ENCODE measurements at regions of chr2 and their contacts with region 1.

Region 1: DNA sequence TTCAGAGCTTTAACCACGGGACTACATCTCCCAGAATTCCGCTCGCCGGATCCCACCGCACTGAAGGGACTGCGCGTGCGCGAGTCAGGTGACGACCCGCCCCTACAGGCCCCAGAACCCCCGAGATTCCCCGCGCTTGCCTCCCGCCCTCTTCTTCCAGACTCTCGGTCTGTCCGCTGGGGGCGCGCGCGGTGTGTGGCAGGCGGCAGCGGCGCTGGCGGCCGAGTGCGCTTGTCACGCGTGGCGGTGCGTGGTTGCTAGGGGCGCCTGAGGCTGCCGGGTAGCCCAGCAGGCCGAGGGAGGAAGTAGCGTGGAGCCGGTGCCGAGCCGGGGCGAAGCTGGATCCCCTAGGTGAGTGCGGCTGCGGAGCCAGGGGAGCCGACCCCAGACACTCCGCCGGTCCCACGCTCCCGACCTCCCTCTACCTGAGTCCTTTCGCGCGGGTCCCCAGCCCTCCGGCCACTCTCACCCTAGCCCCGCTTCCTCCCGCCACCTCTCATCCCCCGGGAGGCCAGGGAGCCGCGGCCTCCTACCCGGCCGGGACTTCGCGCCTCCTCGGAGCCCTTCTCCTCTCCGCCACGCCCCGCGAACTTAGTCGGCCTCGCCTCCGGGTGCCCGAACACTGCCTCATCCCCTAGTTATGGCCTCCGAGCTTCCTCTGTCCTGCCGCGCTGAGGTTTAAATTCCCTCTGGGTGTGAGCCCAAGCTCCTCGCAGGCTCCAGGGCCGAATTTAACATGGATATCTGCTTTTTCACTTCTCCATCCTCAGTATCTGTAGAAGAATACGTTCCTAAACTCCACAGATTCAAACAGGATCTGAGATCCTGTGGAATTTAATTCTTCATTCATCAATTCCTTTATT is at the start of gene TTLL4:
- DNase-seq: peak; percentile 97 to 100 (median 99)

Region 2: GRCh38 chr2:218671654-218672566 is 39.0 kb before region 1 on chr2 and contains the starts of genes RNF25 and STK36:
- intact Hi-C with region 1: loop called (anchors 5 kb)
- DNase-seq: peak; percentile 83 to 98 (median 90)

Region 3: GRCh38 chr2:218781691-218782527 is 71.0 kb after region 1 on chr2 and contains the start of gene CYP27A1:
- intact Hi-C with region 1: loop called (anchors 5 kb)
- DNase-seq: peak; percentile 46 to 95 (median 66)